CD4-positive, alpha-beta T cell (primary cell): ENCODE measurements at regions of chr14 and their contacts with region 1.

Region 1: DNA sequence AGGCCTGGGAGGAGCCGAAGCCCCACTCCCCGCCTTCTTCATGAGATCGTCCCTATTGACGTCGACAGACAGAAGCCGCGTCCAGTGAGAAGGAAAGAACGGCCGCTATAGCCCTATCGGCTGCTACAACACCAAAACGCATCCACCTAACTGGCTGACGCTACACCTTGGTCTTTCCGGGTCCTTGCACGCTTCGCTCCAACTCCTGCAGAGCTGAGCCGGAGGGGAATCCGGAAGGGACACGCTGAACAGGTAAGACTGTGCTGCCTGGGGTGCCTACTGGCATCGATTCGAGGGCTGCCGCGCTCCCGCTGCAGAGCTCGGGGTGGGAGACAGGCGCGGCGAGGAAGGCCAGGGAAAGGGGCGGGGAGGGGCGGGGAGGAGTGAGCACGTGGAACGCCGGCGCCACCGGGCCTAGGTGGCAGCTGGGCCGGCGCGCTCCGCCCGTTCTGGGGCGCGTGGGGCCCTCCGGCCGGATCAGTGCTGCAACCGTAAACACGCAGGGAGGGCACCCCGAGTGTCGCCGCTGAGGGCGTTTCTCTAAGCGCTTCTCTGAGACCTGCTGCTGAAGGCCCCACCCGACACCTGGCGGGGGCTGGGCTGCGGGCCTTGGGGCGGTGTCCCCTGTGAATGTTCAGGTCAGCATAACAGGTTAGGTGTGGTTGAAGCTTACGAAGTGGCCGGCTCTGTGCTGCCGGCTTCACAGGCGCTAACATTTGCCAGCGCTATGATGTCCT is at the start of gene DCAF4:
- DNase-seq: peak in 13 of 14 experiments; percentile 87 to 97 (median 92)
- ATAC-seq: peak; percentile 95
- H3K4me3 ChIP-seq: peak within 1 kb of the TSS; percentile 81
- H3K4me3 Mint-ChIP-seq: peak within 1 kb of the TSS; percentile 97
- H3K27ac ChIP-seq: peak within 1 kb of the TSS; percentile 30 to 70
- H3K27ac Mint-ChIP-seq: peak within 1 kb of the TSS; percentile 93
- H3K4me1 ChIP-seq: peaks cover 20% of the 10 kb centered on the region
- H3K4me1 Mint-ChIP-seq: peaks cover 25% of the 10 kb centered on the region
- H3K27me3 ChIP-seq: no peaks in the 10 kb centered on the region
- H3K27me3 Mint-ChIP-seq: no peaks in the 10 kb centered on the region
- CTCF ChIP-seq: no peak
- total RNA-seq, gene DCAF4: 20.8 to 22.8 TPM

Region 2: DNA sequence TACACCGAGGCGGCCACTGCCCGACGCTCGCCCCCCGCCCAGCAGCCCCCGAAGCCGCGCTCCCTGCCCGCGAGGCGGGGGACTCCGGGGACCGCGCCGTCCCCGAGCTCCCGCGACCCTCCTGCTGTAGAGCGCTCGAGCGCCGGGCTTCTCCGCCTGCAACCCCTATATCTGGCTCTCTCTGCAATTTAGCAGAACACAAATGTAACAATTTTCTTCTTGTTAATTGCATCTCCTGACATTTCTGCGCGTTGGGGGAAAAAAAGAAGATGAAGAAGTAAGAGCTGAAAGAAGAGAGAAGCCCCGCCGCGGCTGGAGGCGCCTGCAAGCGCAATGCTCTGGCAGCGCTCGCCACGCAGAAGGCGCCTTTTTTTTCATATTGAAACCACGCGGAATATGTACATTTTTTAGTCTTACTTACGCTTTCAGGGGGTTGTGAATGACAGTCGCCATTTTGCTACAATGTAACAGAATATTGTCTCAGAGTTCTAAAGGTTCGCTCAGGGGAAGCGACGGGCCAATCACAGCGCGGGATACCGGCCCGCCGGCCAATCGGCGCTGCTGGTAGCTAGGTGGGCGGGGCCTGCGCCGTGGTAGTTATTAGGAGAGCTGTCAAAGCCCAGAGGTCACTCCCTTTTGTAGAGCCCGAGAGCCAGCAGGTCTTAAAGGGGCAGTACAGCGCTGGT is 32.7 kb before region 1 on chr14 and contains the start of gene DPF3:
- CTCF ChIA-PET with region 1: no interaction called
- POLR2A ChIA-PET with region 1: interaction called, 10 read pairs
- intact Hi-C with region 1: loop called (anchors 1 to 2 kb)
- DNase-seq: peak; percentile 82 to 95 (median 89)
- ATAC-seq: peak; percentile 96
- H3K4me3 ChIP-seq: peak within 1 kb of the TSS; percentile 76
- H3K4me3 Mint-ChIP-seq: peak within 1 kb of the TSS; percentile 89
- H3K27ac ChIP-seq: no peak within 1 kb of the TSS
- H3K27ac Mint-ChIP-seq: peak within 1 kb of the TSS; percentile 31
- H3K4me1 ChIP-seq: peaks cover 29% of the 10 kb centered on the region
- H3K4me1 Mint-ChIP-seq: peaks cover 29% of the 10 kb centered on the region
- H3K27me3 ChIP-seq: peaks cover 34 to 36% of the 10 kb centered on the region in 2 experiments
- H3K27me3 Mint-ChIP-seq: peaks cover 55% of the 10 kb centered on the region
- CTCF ChIP-seq: no peak
- total RNA-seq, gene DPF3: 0.27 to 0.31 TPM

Region 3: GRCh38 chr14:72948481-72949138 is 22.1 kb after region 1 on chr14:
- CTCF ChIA-PET with region 1: interaction called, 6 read pairs
- POLR2A ChIA-PET with region 1: interaction called, 3 read pairs
- intact Hi-C with region 1: loop called in 1 of 2 experiments (anchors 2 kb)
- DNase-seq: peak; percentile 42 to 73 (median 53)
- ATAC-seq: peak; percentile 60
- H3K4me3 ChIP-seq: no peak overlapping the region
- H3K4me3 Mint-ChIP-seq: no peak overlapping the region
- H3K27ac ChIP-seq: no peak overlapping the region
- H3K27ac Mint-ChIP-seq: no peak overlapping the region
- H3K4me1 ChIP-seq: no peaks in the 10 kb centered on the region
- H3K4me1 Mint-ChIP-seq: no peaks in the 10 kb centered on the region
- H3K27me3 ChIP-seq: no peaks in the 10 kb centered on the region
- H3K27me3 Mint-ChIP-seq: no peaks in the 10 kb centered on the region
- CTCF ChIP-seq: peak; percentile 89

Region 4: GRCh38 chr14:73026845-73027542 is 100.5 kb after region 1 on chr14 and contains the start of gene ZFYVE1:
- CTCF ChIA-PET with region 1: no interaction called
- POLR2A ChIA-PET with region 1: no interaction called
- intact Hi-C with region 1: loop called in 1 of 2 experiments (anchors 2 kb)
- DNase-seq: peak; percentile 76 to 96 (median 86)
- ATAC-seq: peak; percentile 99
- H3K4me3 ChIP-seq: peak within 1 kb of the TSS; percentile 64
- H3K4me3 Mint-ChIP-seq: peak within 1 kb of the TSS; percentile 97
- H3K27ac ChIP-seq: no peak within 1 kb of the TSS
- H3K27ac Mint-ChIP-seq: peak within 1 kb of the TSS; percentile 79
- H3K4me1 ChIP-seq: peaks cover 18% of the 10 kb centered on the region
- H3K4me1 Mint-ChIP-seq: peaks cover 47% of the 10 kb centered on the region
- H3K27me3 ChIP-seq: no peaks in the 10 kb centered on the region
- H3K27me3 Mint-ChIP-seq: no peaks in the 10 kb centered on the region
- CTCF ChIP-seq: no peak
- total RNA-seq, gene ZFYVE1: 9.3 to 10.9 TPM

Region 5: GRCh38 chr14:73058224-73058921 is 131.9 kb after region 1 on chr14 and contains the start of gene RBM25:
- CTCF ChIA-PET with region 1: no interaction called
- POLR2A ChIA-PET with region 1: interaction called, 9 read pairs
- intact Hi-C with region 1: loop called in 1 of 2 experiments (anchors 5 kb)
- DNase-seq: peak; percentile 89 to 98 (median 92)
- ATAC-seq: peak; percentile 93
- H3K4me3 ChIP-seq: peak within 1 kb of the TSS; percentile 91
- H3K4me3 Mint-ChIP-seq: no peak within 1 kb of the TSS
- H3K27ac ChIP-seq: peak within 1 kb of the TSS; percentile 78 to 93
- H3K27ac Mint-ChIP-seq: no peak within 1 kb of the TSS
- H3K4me1 ChIP-seq: peaks cover 38% of the 10 kb centered on the region
- H3K4me1 Mint-ChIP-seq: peaks cover 36% of the 10 kb centered on the region
- H3K27me3 ChIP-seq: peaks cover 0 to 2% of the 10 kb centered on the region in 2 experiments
- H3K27me3 Mint-ChIP-seq: no peaks in the 10 kb centered on the region
- CTCF ChIP-seq: no peak
- total RNA-seq, gene RBM25: 157 to 161 TPM

Region 6: DNA sequence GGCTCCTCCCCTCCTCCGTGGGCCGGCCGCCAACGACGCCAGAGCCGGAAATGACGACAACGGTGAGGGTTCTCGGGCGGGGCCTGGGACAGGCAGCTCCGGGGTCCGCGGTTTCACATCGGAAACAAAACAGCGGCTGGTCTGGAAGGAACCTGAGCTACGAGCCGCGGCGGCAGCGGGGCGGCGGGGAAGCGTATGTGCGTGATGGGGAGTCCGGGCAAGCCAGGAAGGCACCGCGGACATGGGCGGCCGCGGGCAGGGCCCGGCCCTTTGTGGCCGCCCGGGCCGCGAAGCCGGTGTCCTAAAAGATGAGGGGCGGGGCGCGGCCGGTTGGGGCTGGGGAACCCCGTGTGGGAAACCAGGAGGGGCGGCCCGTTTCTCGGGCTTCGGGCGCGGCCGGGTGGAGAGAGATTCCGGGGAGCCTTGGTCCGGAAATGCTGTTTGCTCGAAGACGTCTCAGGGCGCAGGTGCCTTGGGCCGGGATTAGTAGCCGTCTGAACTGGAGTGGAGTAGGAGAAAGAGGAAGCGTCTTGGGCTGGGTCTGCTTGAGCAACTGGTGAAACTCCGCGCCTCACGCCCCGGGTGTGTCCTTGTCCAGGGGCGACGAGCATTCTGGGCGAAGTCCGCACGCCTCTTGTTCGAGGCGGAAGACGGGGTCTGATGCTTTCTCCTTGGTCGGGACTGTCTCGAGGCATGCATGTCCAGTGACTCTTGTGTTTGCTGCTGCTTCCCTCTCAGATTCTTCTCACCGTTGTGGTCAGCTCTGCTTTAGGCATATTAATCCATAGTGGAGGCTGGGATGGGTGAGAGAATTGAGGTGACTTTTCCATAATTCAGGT is 210.1 kb after region 1 on chr14 and contains the start of gene PSEN1:
- CTCF ChIA-PET with region 1: no interaction called
- POLR2A ChIA-PET with region 1: interaction called, 3 read pairs
- intact Hi-C with region 1: loop called in 1 of 2 experiments (anchors 2 kb)
- DNase-seq: peak; percentile 97 to 99 (median 99)
- ATAC-seq: peak; percentile 93
- H3K4me3 ChIP-seq: peak within 1 kb of the TSS; percentile 98
- H3K4me3 Mint-ChIP-seq: peak within 1 kb of the TSS; percentile 98
- H3K27ac ChIP-seq: peak within 1 kb of the TSS; percentile 92
- H3K27ac Mint-ChIP-seq: peak within 1 kb of the TSS; percentile 99
- H3K4me1 ChIP-seq: peaks cover 23% of the 10 kb centered on the region
- H3K4me1 Mint-ChIP-seq: peaks cover 31% of the 10 kb centered on the region
- H3K27me3 ChIP-seq: no peaks in the 10 kb centered on the region
- H3K27me3 Mint-ChIP-seq: no peaks in the 10 kb centered on the region
- CTCF ChIP-seq: no peak
- total RNA-seq, gene PSEN1: 27.1 to 28.3 TPM

Region 7: GRCh38 chr14:74084277-74085046 is 1158.0 kb after region 1 on chr14 and contains the starts of genes ALDH6A1 and LIN52:
- CTCF ChIA-PET with region 1: no interaction called
- POLR2A ChIA-PET with region 1: no interaction called
- intact Hi-C with region 1: loop called in 1 of 2 experiments (anchors 10 kb)
- DNase-seq: peak; percentile 98 to 100 (median 100)
- ATAC-seq: peak; percentile 86
- H3K4me3 ChIP-seq: peak within 1 kb of the TSS; percentile 95
- H3K4me3 Mint-ChIP-seq: peak within 1 kb of the TSS; percentile 94
- H3K27ac ChIP-seq: peak within 1 kb of the TSS; percentile 52 to 72
- H3K27ac Mint-ChIP-seq: peak within 1 kb of the TSS; percentile 86
- H3K4me1 ChIP-seq: peaks cover 21% of the 10 kb centered on the region
- H3K4me1 Mint-ChIP-seq: peaks cover 36% of the 10 kb centered on the region
- H3K27me3 ChIP-seq: no peaks in the 10 kb centered on the region
- H3K27me3 Mint-ChIP-seq: no peaks in the 10 kb centered on the region
- CTCF ChIP-seq: no peak
- total RNA-seq, gene ALDH6A1: 5.3 to 6.2 TPM
- total RNA-seq, gene LIN52: 5.4 to 6.8 TPM